ENCODE measurements at regions of chr6 and their contacts with region 1.

Region 1: DNA sequence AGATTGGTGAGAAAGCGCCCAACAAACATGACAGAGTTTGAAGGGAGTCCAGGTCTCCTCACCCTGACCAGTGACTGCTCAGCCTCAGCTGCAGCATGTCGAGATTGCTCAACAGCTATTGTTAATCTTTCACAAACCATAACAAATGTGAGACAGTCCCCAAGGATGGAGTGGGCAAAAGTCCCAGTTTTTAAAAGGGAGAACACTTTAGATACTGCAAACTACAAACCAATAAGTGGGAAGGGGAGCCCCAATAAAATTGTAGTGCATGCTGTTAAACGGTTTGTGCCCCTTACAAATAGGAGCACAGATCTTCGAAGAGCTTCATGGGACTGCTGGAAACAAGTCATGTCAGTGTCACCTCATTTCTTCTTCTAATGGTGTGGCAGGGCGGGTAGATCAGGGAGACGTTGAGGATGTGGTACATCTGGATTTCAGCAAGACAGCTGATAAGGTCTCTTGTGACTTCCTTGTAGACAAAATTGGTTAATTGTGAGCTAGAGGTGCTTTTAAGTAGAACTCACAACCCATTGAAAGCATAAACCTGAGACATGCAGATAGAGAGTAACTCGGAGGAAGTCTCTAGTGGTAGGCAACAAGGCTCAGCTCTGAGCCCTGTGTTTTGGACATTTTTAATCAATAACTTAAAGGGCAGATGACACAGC is 134.0 kb upstream of the ARMC2 start:
- DNase-seq: peak; percentile 17
- H3K4me3 Mint-ChIP-seq: no peak overlapping the region
- H3K27ac Mint-ChIP-seq: no peak overlapping the region
- H3K4me1 Mint-ChIP-seq: peaks cover 24% of the 10 kb centered on the region
- H3K27me3 Mint-ChIP-seq: no peaks in the 10 kb centered on the region

Region 2: GRCh38 chr6:108592371-108593337 is 121.6 kb before region 1 on chr6:
- CTCF ChIA-PET with region 1: no interaction called
- POLR2A ChIA-PET with region 1: no interaction called
- intact Hi-C with region 1: no loop called
- DNase-seq: peak; percentile 71
- H3K4me3 Mint-ChIP-seq: no peak overlapping the region
- H3K27ac Mint-ChIP-seq: peak overlapping the region; percentile 42
- H3K4me1 Mint-ChIP-seq: peaks cover 55% of the 10 kb centered on the region
- H3K27me3 Mint-ChIP-seq: no peaks in the 10 kb centered on the region

Region 3: GRCh38 chr6:108661430-108661829 is 52.8 kb before region 1 on chr6:
- CTCF ChIA-PET with region 1: no interaction called
- POLR2A ChIA-PET with region 1: no interaction called
- intact Hi-C with region 1: loop called (anchors 10 kb)
- DNase-seq: no peak
- H3K4me3 Mint-ChIP-seq: no peak overlapping the region
- H3K27ac Mint-ChIP-seq: no peak overlapping the region
- H3K4me1 Mint-ChIP-seq: peaks cover 29% of the 10 kb centered on the region
- H3K27me3 Mint-ChIP-seq: no peaks in the 10 kb centered on the region

Region 4: DNA sequence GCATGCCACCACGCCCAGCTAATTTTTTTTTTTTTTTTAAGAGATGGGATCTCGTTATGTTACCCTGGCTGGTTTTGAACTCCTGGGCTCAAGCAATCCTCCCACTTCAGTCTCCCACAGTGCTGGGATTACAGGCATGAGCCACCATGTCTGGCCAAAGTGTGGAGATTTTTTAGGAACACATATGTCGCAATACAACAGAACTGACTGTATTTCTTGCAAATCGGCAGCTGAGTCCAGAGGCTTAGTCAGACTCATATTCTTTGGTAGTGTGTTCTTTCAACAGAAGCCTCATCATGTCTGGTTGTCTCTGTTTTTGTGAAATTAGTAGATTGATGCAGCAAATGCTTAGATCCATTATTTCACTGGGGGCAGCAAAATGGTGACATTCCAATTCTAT is 692.0 kb after region 1 on chr6:
- CTCF ChIA-PET with region 1: no interaction called
- POLR2A ChIA-PET with region 1: no interaction called
- intact Hi-C with region 1: no loop called
- DNase-seq: no peak
- H3K4me3 Mint-ChIP-seq: no peak overlapping the region
- H3K27ac Mint-ChIP-seq: no peak overlapping the region
- H3K4me1 Mint-ChIP-seq: no peaks in the 10 kb centered on the region
- H3K27me3 Mint-ChIP-seq: peaks cover 2% of the 10 kb centered on the region

Measured in activated CD4-positive, alpha-beta memory T cell treated with anti-CD3 and anti-CD28 coated beads for 36 hours (primary cell).